Lower leg skin (tissue), 4 donors: ENCODE measurements at regions of chr14 and their contacts with region 1.

Region 1: GRCh38 chr14:52609445-52610044 is 56.9 kb downstream of the GPR137C start:
- DNase-seq: no peak
- H3K4me3 ChIP-seq: no peak overlapping the region
- CTCF ChIP-seq: no peak
- POLR2A ChIP-seq: no peak

Region 2: GRCh38 chr14:51989293-51990234 is 620.0 kb before region 1 on chr14 and contains the start of gene RTRAF:
- intact Hi-C with region 1: loop called (anchors 5 kb)
- DNase-seq: peak; percentile 89 to 98
- H3K4me3 ChIP-seq: peak within 1 kb of the TSS; percentile 92
- CTCF ChIP-seq: no peak
- POLR2A ChIP-seq: peak in 1 of 2 donors; percentile 58
- total RNA-seq, gene RTRAF: 32.5 to 48.0 (median 40.6) TPM

Region 3: DNA sequence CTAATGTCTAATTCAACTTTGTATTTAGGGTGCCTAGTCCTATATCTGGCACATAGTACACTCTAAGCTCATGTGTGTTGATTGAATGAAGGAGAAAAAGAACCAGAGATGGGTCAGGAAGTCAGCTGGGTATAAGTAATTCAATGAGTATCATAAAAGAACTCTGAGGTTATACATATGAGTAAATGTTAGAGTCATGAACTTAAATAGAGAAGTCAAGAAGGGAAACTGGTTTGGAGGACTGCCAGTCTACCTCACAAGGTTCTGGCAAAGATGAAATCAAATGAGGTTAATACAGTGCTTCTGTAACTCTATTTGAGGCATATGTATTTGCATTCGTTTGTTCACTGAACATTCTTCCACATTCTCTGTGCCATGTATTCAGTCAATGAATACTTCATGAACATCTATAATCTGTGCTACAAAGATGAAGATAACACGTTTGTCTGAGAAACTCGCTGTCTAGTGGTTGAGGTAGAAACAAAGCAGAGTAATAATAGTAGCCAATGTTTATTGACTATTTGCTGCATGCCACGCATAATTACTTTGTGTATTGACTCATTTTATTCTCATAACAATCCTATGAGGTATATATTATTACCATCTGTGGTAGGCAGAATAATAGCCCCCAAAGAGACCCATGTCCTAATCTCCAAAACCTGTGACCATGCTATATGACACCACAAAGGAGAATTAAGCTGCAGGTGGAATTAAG is 206.6 kb before region 1 on chr14:
- intact Hi-C with region 1: no loop called
- DNase-seq: no peak
- H3K4me3 ChIP-seq: no peak overlapping the region
- CTCF ChIP-seq: no peak
- POLR2A ChIP-seq: no peak

Region 4: DNA sequence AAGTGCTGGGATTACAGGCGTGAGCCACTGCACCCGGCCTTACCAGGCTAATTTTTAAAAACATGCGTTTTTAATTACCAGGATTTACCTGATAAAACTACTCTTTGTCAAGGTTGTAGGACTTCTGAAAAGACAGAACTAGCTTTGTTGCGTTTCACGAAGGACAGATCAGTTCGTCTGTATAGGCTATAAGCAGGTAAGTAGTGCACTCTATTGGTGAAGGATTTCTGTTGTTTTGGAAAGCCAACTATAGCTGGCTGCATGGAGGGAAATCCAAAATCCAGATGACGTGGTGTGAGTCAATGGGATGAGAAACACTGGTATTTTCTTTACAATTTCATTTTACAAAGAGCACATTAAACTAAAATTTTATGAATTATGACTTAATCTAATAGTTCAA is 167.3 kb after region 1 on chr14:
- intact Hi-C with region 1: no loop called
- DNase-seq: no peak
- H3K4me3 ChIP-seq: no peak overlapping the region
- CTCF ChIP-seq: no peak
- POLR2A ChIP-seq: no peak